Activated CD4-positive, alpha-beta T cell treated with anti-CD3 and anti-CD28 coated beads for 36 hours (primary cell): ENCODE measurements at regions of chr3 and their contacts with region 1.

Region 1: DNA sequence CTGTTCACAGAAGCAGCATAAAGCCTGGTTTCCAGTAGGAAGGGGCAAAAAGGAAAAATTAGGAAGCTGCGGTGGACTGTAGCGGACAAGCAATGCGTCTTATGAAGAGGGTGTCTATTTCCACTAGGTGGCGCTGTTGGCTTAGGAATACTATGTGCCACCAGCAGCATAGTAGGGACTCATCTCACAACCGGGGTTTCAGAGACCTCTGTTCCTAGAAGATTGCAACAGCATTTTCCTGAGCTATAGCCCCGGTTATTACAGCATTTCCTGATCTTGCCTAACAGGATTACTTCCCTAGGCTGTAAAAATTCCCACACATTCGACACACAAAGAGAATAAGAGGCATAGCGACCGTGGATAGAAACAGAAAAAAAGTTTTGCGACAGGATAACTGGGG is 683.0 kb downstream of the TBL1XR1 start:
- DNase-seq: peak; percentile 44
- ATAC-seq: no peak
- H3K4me3 Mint-ChIP-seq: no peak overlapping the region
- H3K27ac Mint-ChIP-seq: no peak overlapping the region
- H3K4me1 Mint-ChIP-seq: no peaks in the 10 kb centered on the region
- H3K27me3 Mint-ChIP-seq: no peaks in the 10 kb centered on the region

Region 2: GRCh38 chr3:176714034-176714433 is 199.7 kb after region 1 on chr3:
- CTCF ChIA-PET with region 1: no interaction called
- POLR2A ChIA-PET with region 1: no interaction called
- intact Hi-C with region 1: no loop called
- DNase-seq: no peak
- ATAC-seq: no peak
- H3K4me3 Mint-ChIP-seq: no peak overlapping the region
- H3K27ac Mint-ChIP-seq: no peak overlapping the region
- H3K4me1 Mint-ChIP-seq: no peaks in the 10 kb centered on the region
- H3K27me3 Mint-ChIP-seq: no peaks in the 10 kb centered on the region

Region 3: DNA sequence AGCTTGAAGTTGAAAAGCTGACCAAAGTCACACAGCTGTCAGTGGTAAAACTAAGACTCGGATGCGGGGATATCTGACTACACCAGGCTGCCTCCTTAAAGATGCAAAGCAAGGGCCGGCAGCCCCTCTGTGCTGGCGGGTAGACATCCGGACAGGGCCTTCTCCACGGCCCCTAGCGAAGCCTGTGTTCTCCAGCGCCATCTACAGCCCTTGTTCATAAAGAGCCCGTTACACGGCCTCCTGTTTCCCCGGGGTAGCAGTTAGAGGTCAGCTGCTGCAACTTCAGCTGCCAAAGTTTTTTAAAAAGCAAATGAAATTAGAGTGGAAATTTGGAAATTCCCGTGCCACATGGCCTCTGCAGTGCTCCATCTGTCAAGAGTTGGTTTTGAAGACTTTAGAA is 300.0 kb after region 1 on chr3:
- CTCF ChIA-PET with region 1: no interaction called
- POLR2A ChIA-PET with region 1: no interaction called
- intact Hi-C with region 1: loop called in 1 of 2 experiments (anchors 5 kb)
- DNase-seq: peak; percentile 63
- ATAC-seq: peak; percentile 70
- H3K4me3 Mint-ChIP-seq: no peak overlapping the region
- H3K27ac Mint-ChIP-seq: no peak overlapping the region
- H3K4me1 Mint-ChIP-seq: no peaks in the 10 kb centered on the region
- H3K27me3 Mint-ChIP-seq: peaks cover 4% of the 10 kb centered on the region

Region 4: GRCh38 chr3:176939022-176939817 is 424.9 kb after region 1 on chr3:
- CTCF ChIA-PET with region 1: interaction called, 5 read pairs
- POLR2A ChIA-PET with region 1: no interaction called
- intact Hi-C with region 1: loop called (anchors 1 to 2 kb)
- DNase-seq: peak; percentile 54
- ATAC-seq: peak; percentile 81
- H3K4me3 Mint-ChIP-seq: no peak overlapping the region
- H3K27ac Mint-ChIP-seq: no peak overlapping the region
- H3K4me1 Mint-ChIP-seq: no peaks in the 10 kb centered on the region
- H3K27me3 Mint-ChIP-seq: peaks cover 10% of the 10 kb centered on the region